OCI-LY7 (cell line): ENCODE measurements at regions of chr13 and their contacts with region 1.

Region 1: GRCh38 chr13:32315238-32316027 is at the starts of genes BRCA2 and ZAR1L:
- DNase-seq: peak; percentile 94
- H3K4me3 ChIP-seq: peak within 1 kb of the TSS; percentile 79
- H3K27ac ChIP-seq: peak within 1 kb of the TSS; percentile 92
- H3K4me1 ChIP-seq: peaks cover 27% of the 10 kb centered on the region
- CTCF ChIP-seq: no peak
- total RNA-seq, gene BRCA2: 16.9 and 25.8 TPM in 2 replicates
- total RNA-seq, gene ZAR1L: 0.10 and 0.32 TPM in 2 replicates

Region 2: GRCh38 chr13:31161828-31162590 is 1153.4 kb before region 1 on chr13 and contains the start of gene HSPH1:
- CTCF ChIA-PET with region 1: no interaction called
- POLR2A ChIA-PET with region 1: no interaction called
- intact Hi-C with region 1: loop called (anchors 5 kb)
- DNase-seq: peak; percentile 99
- H3K4me3 ChIP-seq: peak within 1 kb of the TSS; percentile 91
- H3K27ac ChIP-seq: peak within 1 kb of the TSS; percentile 58
- H3K4me1 ChIP-seq: peaks cover 27% of the 10 kb centered on the region
- CTCF ChIP-seq: peak; percentile 45
- total RNA-seq, gene HSPH1: 89.6 and 110 TPM in 2 replicates

Region 3: GRCh38 chr13:32246468-32246867 is 69.0 kb before region 1 on chr13:
- CTCF ChIA-PET with region 1: no interaction called
- POLR2A ChIA-PET with region 1: interaction called, 3 read pairs
- intact Hi-C with region 1: loop called (anchors 5 kb)
- DNase-seq: peak; percentile 59
- H3K4me3 ChIP-seq: no peak overlapping the region
- H3K27ac ChIP-seq: no peak overlapping the region
- H3K4me1 ChIP-seq: no peaks in the 10 kb centered on the region
- CTCF ChIP-seq: peak; percentile 77

Region 4: GRCh38 chr13:32299893-32300292 is 15.5 kb before region 1 on chr13:
- CTCF ChIA-PET with region 1: no interaction called
- POLR2A ChIA-PET with region 1: no interaction called
- intact Hi-C with region 1: no loop called
- DNase-seq: no peak
- H3K4me3 ChIP-seq: no peak overlapping the region
- H3K27ac ChIP-seq: no peak overlapping the region
- H3K4me1 ChIP-seq: no peaks in the 10 kb centered on the region
- CTCF ChIP-seq: no peak

Region 5: DNA sequence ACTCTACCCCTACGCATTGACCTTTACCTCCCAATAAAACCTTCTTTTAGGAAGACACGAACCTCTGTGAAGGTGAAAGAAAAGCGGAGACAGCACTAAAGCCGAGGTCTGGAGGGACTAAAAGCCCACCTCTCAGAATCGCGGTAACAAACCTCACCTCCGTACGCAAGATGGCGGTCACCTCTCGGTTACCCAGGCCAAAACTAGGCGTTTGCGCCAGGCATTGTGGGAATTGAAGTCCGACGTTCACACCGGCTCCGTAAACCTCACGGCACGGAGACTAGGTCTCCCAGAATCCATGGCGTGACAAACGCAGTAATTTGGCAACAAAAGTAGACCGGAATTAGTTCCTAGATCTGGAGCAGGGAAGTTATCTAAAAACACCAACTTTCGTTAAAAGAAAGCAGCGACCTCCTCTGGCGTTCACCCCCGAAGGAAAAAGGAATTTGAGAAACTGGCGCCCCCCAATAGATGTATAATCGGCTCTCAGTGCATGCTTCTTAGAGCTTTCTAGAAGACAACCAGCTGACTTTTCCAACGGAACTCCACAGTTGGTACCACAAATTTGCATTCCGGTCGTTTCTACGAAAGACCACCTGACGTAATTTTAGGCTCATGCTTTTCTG is 223.3 kb after region 1 on chr13 and contains the start of gene N4BP2L2:
- CTCF ChIA-PET with region 1: no interaction called
- POLR2A ChIA-PET with region 1: no interaction called
- intact Hi-C with region 1: loop called (anchors 2 kb)
- DNase-seq: peak; percentile 95
- H3K4me3 ChIP-seq: peak within 1 kb of the TSS; percentile 83
- H3K27ac ChIP-seq: peak within 1 kb of the TSS; percentile 54
- H3K4me1 ChIP-seq: peaks cover 11% of the 10 kb centered on the region
- CTCF ChIP-seq: peak; percentile 57
- total RNA-seq, gene N4BP2L2: 54.2 and 57.5 TPM in 2 replicates

Region 6: DNA sequence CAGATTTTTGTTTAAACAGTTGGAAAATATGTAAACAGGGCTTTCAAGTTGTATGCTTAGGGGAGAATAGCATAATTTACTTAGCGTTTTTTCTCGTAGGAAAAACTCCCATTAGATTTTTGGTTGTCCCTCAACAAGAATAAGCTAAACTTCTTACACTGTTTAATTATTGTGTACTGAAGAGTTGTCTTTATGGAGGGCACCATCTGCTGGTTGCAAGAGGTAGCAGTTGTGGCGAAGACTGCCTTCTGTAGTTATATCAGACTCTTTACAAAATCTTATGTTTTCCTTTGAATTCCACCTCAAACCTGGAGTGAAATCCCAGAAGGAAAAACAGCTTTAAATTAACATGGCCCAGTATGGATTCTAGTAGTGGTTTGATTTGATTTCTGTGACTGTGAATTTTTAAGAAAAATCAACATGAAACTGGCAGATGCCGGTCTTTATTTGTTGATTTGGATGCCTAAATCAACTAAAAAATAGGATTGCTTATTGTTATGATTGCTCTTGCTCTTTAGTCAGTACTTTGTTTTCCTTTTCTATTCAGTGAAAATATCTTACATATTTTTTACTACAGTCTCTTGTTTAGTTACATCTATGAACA is 324.2 kb after region 1 on chr13:
- CTCF ChIA-PET with region 1: no interaction called
- POLR2A ChIA-PET with region 1: interaction called, 3 read pairs
- intact Hi-C with region 1: loop called (anchors 10 kb)
- DNase-seq: peak; percentile 70
- H3K4me3 ChIP-seq: no peak overlapping the region
- H3K27ac ChIP-seq: no peak overlapping the region
- H3K4me1 ChIP-seq: peaks cover 37% of the 10 kb centered on the region
- CTCF ChIP-seq: peak; percentile 98

Region 7: GRCh38 chr13:32824671-32825070 is 509.2 kb after region 1 on chr13:
- CTCF ChIA-PET with region 1: no interaction called
- POLR2A ChIA-PET with region 1: no interaction called
- intact Hi-C with region 1: no loop called
- DNase-seq: no peak
- H3K4me3 ChIP-seq: no peak overlapping the region
- H3K27ac ChIP-seq: no peak overlapping the region
- H3K4me1 ChIP-seq: no peaks in the 10 kb centered on the region
- CTCF ChIP-seq: no peak